CD8-positive, alpha-beta T cell (primary cell): ENCODE measurements at regions of chr2 and their contacts with region 1.

Region 1: GRCh38 chr2:38581193-38582147 is 21.3 kb downstream of the HNRNPLL start:
- DNase-seq: peak in 6 of 9 experiments; percentile 33 to 85 (median 63)
- ATAC-seq: peak; percentile 93
- H3K4me3 ChIP-seq: no peak overlapping the region
- H3K4me3 Mint-ChIP-seq: no peak overlapping the region
- H3K27ac ChIP-seq: no peak overlapping the region
- H3K27ac Mint-ChIP-seq: no peak overlapping the region
- H3K4me1 ChIP-seq: no peaks in the 10 kb centered on the region
- H3K4me1 Mint-ChIP-seq: peaks cover 6% of the 10 kb centered on the region
- H3K27me3 ChIP-seq: no peaks in the 10 kb centered on the region
- H3K27me3 Mint-ChIP-seq: no peaks in the 10 kb centered on the region
- CTCF ChIP-seq: peak; percentile 68

Region 2: GRCh38 chr2:37653805-37654378 is 927.6 kb before region 1 on chr2:
- CTCF ChIA-PET with region 1: no interaction called
- POLR2A ChIA-PET with region 1: no interaction called
- intact Hi-C with region 1: no loop called
- DNase-seq: peak in 2 of 9 experiments; percentile 53 to 68
- ATAC-seq: no peak
- H3K4me3 ChIP-seq: no peak overlapping the region
- H3K4me3 Mint-ChIP-seq: peak overlapping the region; percentile 53
- H3K27ac ChIP-seq: peak overlapping the region in 1 of 2 experiments; percentile 62
- H3K27ac Mint-ChIP-seq: peak overlapping the region; percentile 95
- H3K4me1 ChIP-seq: peaks cover 85% of the 10 kb centered on the region
- H3K4me1 Mint-ChIP-seq: peaks cover 93% of the 10 kb centered on the region
- H3K27me3 ChIP-seq: no peaks in the 10 kb centered on the region
- H3K27me3 Mint-ChIP-seq: no peaks in the 10 kb centered on the region
- CTCF ChIP-seq: no peak

Region 3: GRCh38 chr2:38535744-38536506 is 45.5 kb before region 1 on chr2:
- CTCF ChIA-PET with region 1: interaction called, 15 read pairs
- POLR2A ChIA-PET with region 1: no interaction called
- intact Hi-C with region 1: loop called (anchors 1 to 2 kb)
- DNase-seq: peak; percentile 57 to 87 (median 78)
- ATAC-seq: peak; percentile 94
- H3K4me3 ChIP-seq: peak overlapping the region; percentile 47 to 48
- H3K4me3 Mint-ChIP-seq: peak overlapping the region; percentile 57
- H3K27ac ChIP-seq: no peak overlapping the region
- H3K27ac Mint-ChIP-seq: no peak overlapping the region
- H3K4me1 ChIP-seq: peaks cover 7% of the 10 kb centered on the region
- H3K4me1 Mint-ChIP-seq: peaks cover 6% of the 10 kb centered on the region
- H3K27me3 ChIP-seq: no peaks in the 10 kb centered on the region
- H3K27me3 Mint-ChIP-seq: peaks cover 14% of the 10 kb centered on the region
- CTCF ChIP-seq: peak; percentile 88

Region 4: DNA sequence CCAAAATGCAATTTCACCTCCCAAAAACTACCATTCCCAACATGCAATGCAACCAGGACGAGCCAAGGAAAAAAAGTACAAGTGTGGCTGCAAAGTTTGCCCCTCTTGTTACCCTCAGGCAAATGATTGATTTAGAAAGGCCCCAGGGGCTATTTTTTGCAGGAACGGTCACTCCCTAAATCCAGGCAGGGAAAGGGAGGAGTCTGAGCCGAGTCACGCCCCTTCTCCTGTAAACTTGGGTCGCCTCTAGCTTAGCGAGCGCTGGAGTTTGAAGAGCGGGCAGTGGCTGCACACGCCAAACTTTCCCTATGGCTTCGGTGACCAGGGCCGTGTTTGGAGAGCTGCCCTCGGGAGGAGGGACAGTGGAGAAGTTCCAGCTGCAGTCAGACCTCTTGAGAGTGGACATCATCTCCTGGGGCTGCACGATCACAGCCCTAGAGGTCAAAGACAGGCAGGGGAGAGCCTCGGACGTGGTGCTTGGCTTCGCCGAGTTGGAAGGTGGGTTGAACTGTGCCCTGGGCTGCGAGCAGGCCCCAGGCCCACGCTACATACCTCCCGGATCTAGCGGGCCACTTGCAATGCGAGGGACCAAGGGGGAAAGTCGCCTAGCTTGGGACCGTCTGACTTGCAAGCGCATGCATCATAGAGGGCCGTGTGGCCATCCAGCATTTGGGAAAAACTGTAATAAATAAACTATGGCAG is 84.5 kb after region 1 on chr2 and contains the start of gene GALM:
- CTCF ChIA-PET with region 1: interaction called, 15 read pairs
- POLR2A ChIA-PET with region 1: no interaction called
- intact Hi-C with region 1: loop called in 1 of 2 experiments (anchors 5 kb)
- DNase-seq: peak in 7 of 9 experiments; percentile 18 to 79 (median 47)
- ATAC-seq: peak; percentile 33
- H3K4me3 ChIP-seq: peak within 1 kb of the TSS; percentile 88 to 92
- H3K4me3 Mint-ChIP-seq: peak within 1 kb of the TSS; percentile 88
- H3K27ac ChIP-seq: peak within 1 kb of the TSS; percentile 22 to 72
- H3K27ac Mint-ChIP-seq: peak within 1 kb of the TSS; percentile 90
- H3K4me1 ChIP-seq: peaks cover 16% of the 10 kb centered on the region
- H3K4me1 Mint-ChIP-seq: peaks cover 56% of the 10 kb centered on the region
- H3K27me3 ChIP-seq: no peaks in the 10 kb centered on the region
- H3K27me3 Mint-ChIP-seq: no peaks in the 10 kb centered on the region
- CTCF ChIP-seq: no peak
- total RNA-seq, gene GALM: 4.4 to 4.7 TPM

Region 5: DNA sequence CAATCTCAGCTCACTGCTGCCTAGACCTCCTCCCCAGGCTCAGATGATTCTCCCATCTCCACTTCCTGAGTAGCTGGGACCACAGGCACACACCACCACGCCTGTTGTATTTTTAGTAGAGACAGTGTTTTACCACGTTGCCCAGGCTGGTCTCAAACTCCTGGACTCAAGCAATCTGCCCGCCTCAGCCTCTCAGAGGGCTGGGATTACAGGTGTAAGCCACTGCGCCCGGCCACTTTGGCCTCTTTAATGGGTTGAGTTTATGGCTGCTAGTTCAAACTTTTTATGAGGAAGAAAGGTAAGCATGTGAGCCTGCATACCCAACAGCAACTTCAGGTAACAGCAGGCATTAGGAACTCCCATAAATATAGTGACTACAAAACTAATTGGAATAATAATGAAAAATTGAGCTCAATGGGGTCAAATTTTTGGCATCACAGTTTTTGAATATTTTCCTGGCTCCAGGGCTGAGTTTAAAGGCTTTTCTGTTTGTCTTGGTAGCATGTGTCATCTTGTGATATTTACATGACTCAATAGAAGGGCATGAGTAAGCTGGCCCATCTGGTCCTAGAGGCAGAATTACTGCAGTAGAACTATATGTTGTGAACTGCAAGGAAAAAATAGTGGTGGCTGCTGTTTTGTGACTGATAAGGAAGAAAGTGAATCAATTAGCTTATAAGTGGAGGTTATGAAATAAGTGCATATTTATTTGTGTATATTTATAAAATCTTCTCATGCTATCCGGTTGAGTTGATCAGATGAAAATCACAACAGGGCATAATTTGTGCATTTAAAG is 109.2 kb after region 1 on chr2:
- CTCF ChIA-PET with region 1: interaction called, 10 read pairs
- POLR2A ChIA-PET with region 1: no interaction called
- intact Hi-C with region 1: no loop called
- DNase-seq: no peak
- ATAC-seq: no peak
- H3K4me3 ChIP-seq: no peak overlapping the region
- H3K4me3 Mint-ChIP-seq: no peak overlapping the region
- H3K27ac ChIP-seq: no peak overlapping the region
- H3K27ac Mint-ChIP-seq: peak overlapping the region; percentile 3
- H3K4me1 ChIP-seq: no peaks in the 10 kb centered on the region
- H3K4me1 Mint-ChIP-seq: peaks cover 30% of the 10 kb centered on the region
- H3K27me3 ChIP-seq: no peaks in the 10 kb centered on the region
- H3K27me3 Mint-ChIP-seq: no peaks in the 10 kb centered on the region
- CTCF ChIP-seq: no peak

Region 6: DNA sequence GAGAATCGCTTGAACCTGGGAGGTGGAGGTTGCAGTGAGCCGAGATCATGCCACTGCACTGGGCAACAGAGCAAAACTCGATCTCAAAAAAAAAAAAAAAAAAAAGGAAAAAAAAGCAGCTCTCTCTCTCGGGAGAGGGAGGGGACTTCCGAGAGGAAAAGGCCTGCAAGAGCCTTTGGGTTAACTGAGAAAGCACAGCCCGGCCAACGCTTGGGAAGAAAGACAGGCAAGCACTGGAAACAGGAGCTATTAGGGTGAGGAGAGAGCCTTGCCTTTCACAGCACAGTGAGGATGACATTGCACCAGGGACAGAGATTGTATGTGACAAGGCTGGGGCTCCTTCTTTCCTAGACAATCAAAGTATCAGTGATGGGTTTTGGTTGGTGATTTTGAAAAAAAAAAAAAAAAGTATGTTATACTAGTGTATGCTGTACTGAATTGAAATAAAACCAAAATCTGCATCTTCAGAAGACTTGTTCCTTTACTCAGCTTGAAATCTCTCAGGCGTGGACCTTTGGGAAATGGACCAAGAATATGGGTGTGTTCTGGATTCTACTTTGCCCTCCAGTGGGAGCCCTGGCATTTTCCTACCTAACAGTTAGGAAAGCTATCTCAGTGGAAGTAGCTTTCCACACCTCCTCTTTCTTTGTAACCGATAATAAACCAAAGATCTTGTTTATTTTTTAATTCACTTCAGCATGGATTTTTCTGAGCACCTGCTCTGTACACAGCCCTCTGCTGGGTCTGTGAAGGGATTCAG is 153.0 kb after region 1 on chr2:
- CTCF ChIA-PET with region 1: interaction called, 155 read pairs
- POLR2A ChIA-PET with region 1: no interaction called
- intact Hi-C with region 1: loop called in 1 of 2 experiments (anchors 1 kb)
- DNase-seq: no peak
- ATAC-seq: no peak
- H3K4me3 ChIP-seq: no peak overlapping the region
- H3K4me3 Mint-ChIP-seq: no peak overlapping the region
- H3K27ac ChIP-seq: no peak overlapping the region
- H3K27ac Mint-ChIP-seq: no peak overlapping the region
- H3K4me1 ChIP-seq: no peaks in the 10 kb centered on the region
- H3K4me1 Mint-ChIP-seq: peaks cover 7% of the 10 kb centered on the region
- H3K27me3 ChIP-seq: no peaks in the 10 kb centered on the region
- H3K27me3 Mint-ChIP-seq: no peaks in the 10 kb centered on the region
- CTCF ChIP-seq: no peak

Region 7: GRCh38 chr2:38835015-38835601 is 253.6 kb after region 1 on chr2:
- CTCF ChIA-PET with region 1: interaction called, 13 read pairs
- POLR2A ChIA-PET with region 1: no interaction called
- intact Hi-C with region 1: loop called (anchors 2 kb)
- DNase-seq: peak in 2 of 9 experiments; percentile 17 to 41
- ATAC-seq: no peak
- H3K4me3 ChIP-seq: no peak overlapping the region
- H3K4me3 Mint-ChIP-seq: no peak overlapping the region
- H3K27ac ChIP-seq: no peak overlapping the region
- H3K27ac Mint-ChIP-seq: no peak overlapping the region
- H3K4me1 ChIP-seq: no peaks in the 10 kb centered on the region
- H3K4me1 Mint-ChIP-seq: no peaks in the 10 kb centered on the region
- H3K27me3 ChIP-seq: no peaks in the 10 kb centered on the region
- H3K27me3 Mint-ChIP-seq: no peaks in the 10 kb centered on the region
- CTCF ChIP-seq: no peak

Region 8: DNA sequence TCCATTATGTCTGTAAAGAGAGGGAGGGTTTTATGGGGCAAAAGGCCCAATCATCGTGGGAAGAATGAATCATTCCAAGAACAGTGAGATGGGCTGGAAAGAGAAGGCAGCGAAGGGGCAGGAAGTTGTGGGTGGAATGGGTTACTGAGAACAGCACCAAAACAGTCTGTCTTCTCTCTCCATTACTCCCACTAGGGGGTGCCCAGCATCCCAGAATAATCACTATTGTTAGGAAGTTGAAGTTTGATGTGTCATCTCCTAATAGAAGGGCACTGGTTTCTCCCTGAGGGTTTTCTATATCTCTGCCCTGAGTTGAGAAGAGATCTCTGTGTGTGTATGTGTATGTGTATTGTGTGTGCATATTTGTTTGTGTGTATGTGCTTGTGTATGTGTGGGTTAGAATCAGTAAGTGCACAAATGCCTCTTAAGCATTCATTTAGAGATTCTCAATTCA is 932.2 kb after region 1 on chr2:
- CTCF ChIA-PET with region 1: no interaction called
- POLR2A ChIA-PET with region 1: no interaction called
- intact Hi-C with region 1: no loop called
- DNase-seq: peak in 1 of 9 experiments; percentile 13
- ATAC-seq: no peak
- H3K4me3 ChIP-seq: no peak overlapping the region
- H3K4me3 Mint-ChIP-seq: no peak overlapping the region
- H3K27ac ChIP-seq: no peak overlapping the region
- H3K27ac Mint-ChIP-seq: no peak overlapping the region
- H3K4me1 ChIP-seq: no peaks in the 10 kb centered on the region
- H3K4me1 Mint-ChIP-seq: peaks cover 2% of the 10 kb centered on the region
- H3K27me3 ChIP-seq: no peaks in the 10 kb centered on the region
- H3K27me3 Mint-ChIP-seq: no peaks in the 10 kb centered on the region
- CTCF ChIP-seq: no peak